PC-3 (cell line): ENCODE measurements at regions of chr10 and their contacts with region 1.

Region 1: DNA sequence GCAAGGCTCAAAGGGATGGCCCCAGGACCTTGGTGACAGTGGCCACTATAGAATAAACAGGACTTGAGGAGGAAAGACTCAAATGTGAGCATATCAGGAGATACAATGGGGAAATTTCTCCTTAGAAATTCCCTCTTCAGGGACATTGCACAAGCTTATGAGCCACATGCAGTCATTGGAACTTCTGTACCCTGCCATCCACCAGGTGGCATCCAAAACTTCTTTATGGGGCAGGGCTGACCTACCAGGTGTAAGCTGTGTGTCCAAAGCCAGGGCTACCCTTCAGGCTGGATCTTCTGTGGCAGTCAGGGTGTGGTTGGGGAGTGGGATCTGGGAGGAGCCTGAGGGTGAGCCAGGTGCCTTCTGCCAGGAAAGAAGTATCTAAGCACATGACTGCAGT is 36.6 kb upstream of the LRRC18 start:
- DNase-seq: peak; percentile 73
- ATAC-seq: peak; percentile 67; the same call in 1 of the 2 replicates
- H3K4me3 ChIP-seq: no peak overlapping the region
- H3K27ac ChIP-seq: no peak overlapping the region
- H3K4me1 ChIP-seq: no peaks in the 10 kb centered on the region
- H3K27me3 ChIP-seq: peaks cover 17% of the 10 kb centered on the region
- CTCF ChIP-seq: peak; percentile 80

Region 2: DNA sequence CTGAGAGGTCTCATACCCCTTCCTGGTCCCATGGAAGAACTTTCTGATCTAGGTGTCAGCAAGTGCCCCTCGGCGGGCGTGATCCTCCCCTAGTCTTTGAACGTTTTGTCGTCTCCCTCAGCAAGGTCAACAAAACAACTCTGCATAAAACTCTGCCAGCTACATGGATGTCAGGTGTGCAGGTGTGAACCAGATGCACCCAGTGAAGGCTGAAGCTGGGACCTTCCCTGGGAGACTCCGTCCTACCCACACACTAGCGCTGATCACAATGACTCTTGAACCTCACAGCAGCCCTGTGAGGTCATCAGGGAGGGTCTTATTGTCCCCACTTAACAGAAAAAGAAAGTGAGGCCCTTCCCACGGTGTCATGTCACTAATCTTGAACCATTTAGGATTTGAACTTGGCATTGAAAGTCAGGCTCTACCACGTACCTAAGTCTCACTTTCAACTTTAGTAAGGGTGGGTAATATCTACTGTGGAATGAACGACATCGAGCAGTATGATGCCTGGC is 71.0 kb after region 1 on chr10:
- CTCF ChIA-PET with region 1: no interaction called
- POLR2A ChIA-PET with region 1: no interaction called
- intact Hi-C with region 1: loop called (anchors 2 kb)
- DNase-seq: no peak
- ATAC-seq: no peak
- H3K4me3 ChIP-seq: no peak overlapping the region
- H3K27ac ChIP-seq: no peak overlapping the region
- H3K4me1 ChIP-seq: no peaks in the 10 kb centered on the region
- H3K27me3 ChIP-seq: peaks cover 87% of the 10 kb centered on the region
- CTCF ChIP-seq: no peak